A673 (cell line): ENCODE measurements at regions of chr1 and their contacts with region 1.

Region 1: GRCh38 chr1:200367841-200368534 is 41.8 kb downstream of the ZNF281 start:
- DNase-seq: no peak
- H3K4me3 ChIP-seq: no peak overlapping the region
- H3K27ac ChIP-seq: no peak overlapping the region
- H3K4me1 ChIP-seq: peaks cover 7% of the 10 kb centered on the region
- H3K27me3 ChIP-seq: no peaks in the 10 kb centered on the region
- CTCF ChIP-seq: no peak

Region 2: GRCh38 chr1:199046618-199047017 is 1321.4 kb before region 1 on chr1:
- CTCF ChIA-PET with region 1: no interaction called
- POLR2A ChIA-PET with region 1: interaction called, 17 read pairs
- intact Hi-C with region 1: no loop called
- DNase-seq: no peak
- H3K4me3 ChIP-seq: no peak overlapping the region
- H3K27ac ChIP-seq: no peak overlapping the region
- H3K4me1 ChIP-seq: no peaks in the 10 kb centered on the region
- H3K27me3 ChIP-seq: no peaks in the 10 kb centered on the region
- CTCF ChIP-seq: peak; percentile 37; the same call in 1 of the 2 replicates

Region 3: GRCh38 chr1:200448034-200448762 is 80.2 kb after region 1 on chr1:
- CTCF ChIA-PET with region 1: no interaction called
- POLR2A ChIA-PET with region 1: no interaction called
- intact Hi-C with region 1: no loop called
- DNase-seq: no peak
- H3K4me3 ChIP-seq: no peak overlapping the region
- H3K27ac ChIP-seq: no peak overlapping the region
- H3K4me1 ChIP-seq: no peaks in the 10 kb centered on the region
- H3K27me3 ChIP-seq: no peaks in the 10 kb centered on the region
- CTCF ChIP-seq: no peak

Region 4: DNA sequence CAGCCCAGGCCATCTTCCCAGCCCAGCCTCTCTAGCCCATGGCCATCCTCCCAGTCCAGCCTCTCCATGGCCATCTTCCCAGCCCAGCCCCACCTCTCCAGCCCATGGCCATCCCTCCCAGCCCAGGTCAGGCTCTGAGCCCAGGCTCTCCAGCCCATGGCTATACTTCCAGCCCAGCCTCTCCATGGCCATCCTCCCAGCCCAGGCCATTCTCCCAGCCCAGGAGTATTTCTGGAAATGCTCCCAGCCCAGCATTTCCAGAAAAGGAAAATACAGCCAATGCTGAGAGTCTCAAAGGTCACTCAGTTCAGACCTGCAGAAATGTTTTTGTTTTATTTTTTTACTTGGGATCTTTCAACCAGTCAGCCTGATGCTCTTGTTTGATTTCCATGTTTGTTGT is 111.8 kb after region 1 on chr1:
- CTCF ChIA-PET with region 1: interaction called, 15 read pairs
- POLR2A ChIA-PET with region 1: no interaction called
- intact Hi-C with region 1: no loop called
- DNase-seq: no peak
- H3K4me3 ChIP-seq: no peak overlapping the region
- H3K27ac ChIP-seq: no peak overlapping the region
- H3K4me1 ChIP-seq: no peaks in the 10 kb centered on the region
- H3K27me3 ChIP-seq: no peaks in the 10 kb centered on the region
- CTCF ChIP-seq: no peak